Thyroid gland (tissue), 4 donors: ENCODE measurements at regions of chr1 and their contacts with region 1.

Region 1: DNA sequence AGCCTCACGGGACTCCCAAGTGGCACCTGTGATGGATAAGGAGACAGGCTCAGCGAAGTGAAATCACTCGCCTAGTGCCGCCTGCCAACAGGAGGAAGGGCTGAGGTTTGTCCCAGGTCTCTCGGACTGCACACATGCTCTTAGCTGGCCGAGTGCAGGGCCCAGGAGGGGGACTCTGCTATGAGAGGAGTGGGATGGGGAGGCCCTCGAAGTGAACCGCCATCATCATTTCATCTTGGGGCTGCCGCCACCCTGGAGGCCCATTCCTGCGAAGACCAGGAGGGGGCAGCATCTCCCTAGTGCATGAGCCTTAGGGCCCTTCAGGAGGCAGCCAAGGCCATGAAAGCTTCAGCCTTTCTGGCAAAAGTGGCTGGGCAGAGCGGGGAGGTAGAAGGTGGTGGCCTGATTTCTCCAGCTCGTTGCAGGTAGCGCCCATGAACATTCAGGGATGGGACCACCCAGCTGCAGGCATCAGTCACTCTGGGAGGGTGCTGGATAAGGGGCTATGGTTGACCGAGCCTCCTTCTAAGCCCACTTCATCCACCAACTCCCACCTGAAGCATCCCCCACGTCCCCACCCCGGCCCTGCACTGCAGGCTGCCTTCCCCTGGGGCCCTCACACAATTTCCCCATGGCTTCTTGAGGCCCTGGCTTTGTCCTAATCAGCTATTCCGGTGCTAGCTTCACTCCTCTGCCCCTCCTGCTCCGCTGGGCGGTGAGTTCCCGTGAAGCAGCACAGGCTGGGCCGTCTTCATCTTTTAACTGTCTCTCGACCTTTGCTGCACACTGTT is 17.2 kb upstream of the RASSF5 start:
- DNase-seq: peak; percentile 83 to 84
- H3K4me3 ChIP-seq: no peak overlapping the region
- H3K27ac ChIP-seq: peak overlapping the region in 1 of 3 donors; percentile 46
- H3K4me1 ChIP-seq: peaks cover 6% of the 10 kb centered on the region in 2 donors
- H3K27me3 ChIP-seq: no peaks in the 10 kb centered on the region
- CTCF ChIP-seq: peak; percentile 75 to 98 (median 96)
- POLR2A ChIP-seq: no peak

Region 2: DNA sequence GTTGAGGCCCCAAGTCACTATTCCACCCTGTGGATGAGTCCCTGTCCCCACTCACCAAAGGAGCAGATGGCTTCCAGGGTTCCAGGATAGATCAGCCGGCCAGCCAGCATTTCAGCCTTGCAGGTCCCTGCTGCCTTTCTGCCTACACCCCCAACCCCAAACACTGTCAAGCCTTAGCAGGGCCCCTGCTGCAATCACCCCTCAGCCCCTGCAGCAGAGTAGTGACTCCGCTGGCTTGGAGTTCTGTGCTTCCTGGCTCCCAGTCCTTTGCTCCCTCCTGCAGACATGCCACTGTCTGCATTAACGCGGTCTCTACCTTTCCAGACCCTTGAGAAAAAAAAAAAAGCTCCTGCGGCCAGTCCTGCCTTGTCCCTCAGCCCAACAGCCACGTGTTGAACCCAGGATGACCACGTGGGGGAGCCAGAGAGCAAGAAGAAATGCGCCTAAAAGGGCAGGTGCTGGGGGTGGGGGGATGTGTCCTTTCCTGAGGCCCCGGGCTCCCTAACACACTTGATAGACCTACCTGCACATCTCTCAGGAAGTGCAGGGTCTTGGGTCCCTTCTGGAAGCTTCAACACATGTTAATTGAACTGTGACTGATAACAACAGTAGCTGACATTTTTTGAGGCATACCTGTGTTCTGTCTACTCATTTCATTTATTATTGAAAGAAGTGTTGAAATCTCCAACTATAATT is 54.5 kb after region 1 on chr1:
- intact Hi-C with region 1: loop called (anchors 10 kb)
- DNase-seq: peak; percentile 82 to 88
- H3K4me3 ChIP-seq: no peak overlapping the region
- H3K27ac ChIP-seq: peak overlapping the region in 1 of 3 donors; percentile 37
- H3K4me1 ChIP-seq: peaks cover 16 to 30% of the 10 kb centered on the region in 2 donors
- H3K27me3 ChIP-seq: no peaks in the 10 kb centered on the region
- CTCF ChIP-seq: peak; percentile 67 to 90 (median 72)
- POLR2A ChIP-seq: no peak

Region 3: DNA sequence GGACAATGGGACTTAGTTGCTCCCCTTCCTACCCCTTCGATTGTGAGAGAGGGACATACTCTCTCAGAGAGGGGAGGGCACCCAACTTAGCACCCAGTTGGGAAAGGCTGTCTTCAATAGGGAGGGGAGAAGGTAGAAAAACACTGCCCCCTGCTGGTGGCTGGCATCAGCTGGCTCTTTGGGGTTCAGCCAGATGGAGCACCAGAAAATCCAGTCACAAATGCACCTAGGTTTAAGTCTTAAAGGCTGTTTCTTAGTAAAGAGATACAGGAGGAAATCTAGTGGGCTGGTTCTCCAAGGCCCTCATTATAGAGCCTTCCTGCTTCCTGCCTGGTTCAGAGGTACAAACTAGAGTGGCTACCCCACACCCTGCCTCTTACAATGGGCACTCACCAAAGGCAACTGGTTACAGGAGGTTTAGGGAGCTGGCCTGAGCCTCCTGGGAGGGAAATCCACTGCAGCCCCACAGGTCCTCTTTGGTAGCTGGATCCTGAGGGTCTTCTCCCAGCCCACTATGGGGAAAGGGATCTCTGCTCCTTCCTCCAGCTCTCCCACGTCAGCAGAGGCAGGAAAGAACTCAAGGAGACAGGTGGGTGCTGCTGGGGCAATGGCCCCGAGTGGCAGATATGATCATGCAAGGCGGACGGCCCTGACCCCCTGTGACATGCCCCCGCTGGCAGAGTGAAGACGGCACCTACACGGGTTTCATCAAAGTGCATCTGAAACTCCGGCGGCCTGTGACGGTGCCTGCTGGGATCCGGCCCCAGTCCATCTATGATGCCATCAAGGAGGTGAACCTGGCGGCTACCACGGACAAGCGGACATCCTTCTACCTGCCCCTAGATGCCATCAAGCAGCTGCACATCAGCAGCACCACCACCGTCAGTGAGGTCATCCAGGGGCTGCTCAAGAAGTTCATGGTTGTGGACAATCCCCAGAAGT is 93.8 kb after region 1 on chr1:
- intact Hi-C with region 1: loop called (anchors 2 kb)
- DNase-seq: peak; percentile 80 to 82
- H3K4me3 ChIP-seq: no peak overlapping the region
- H3K27ac ChIP-seq: peak overlapping the region in 2 of 3 donors; percentile 4 to 6
- H3K4me1 ChIP-seq: no peaks in the 10 kb centered on the region
- H3K27me3 ChIP-seq: no peaks in the 10 kb centered on the region
- CTCF ChIP-seq: peak; percentile 80 to 96 (median 85)
- POLR2A ChIP-seq: no peak

Region 4: DNA sequence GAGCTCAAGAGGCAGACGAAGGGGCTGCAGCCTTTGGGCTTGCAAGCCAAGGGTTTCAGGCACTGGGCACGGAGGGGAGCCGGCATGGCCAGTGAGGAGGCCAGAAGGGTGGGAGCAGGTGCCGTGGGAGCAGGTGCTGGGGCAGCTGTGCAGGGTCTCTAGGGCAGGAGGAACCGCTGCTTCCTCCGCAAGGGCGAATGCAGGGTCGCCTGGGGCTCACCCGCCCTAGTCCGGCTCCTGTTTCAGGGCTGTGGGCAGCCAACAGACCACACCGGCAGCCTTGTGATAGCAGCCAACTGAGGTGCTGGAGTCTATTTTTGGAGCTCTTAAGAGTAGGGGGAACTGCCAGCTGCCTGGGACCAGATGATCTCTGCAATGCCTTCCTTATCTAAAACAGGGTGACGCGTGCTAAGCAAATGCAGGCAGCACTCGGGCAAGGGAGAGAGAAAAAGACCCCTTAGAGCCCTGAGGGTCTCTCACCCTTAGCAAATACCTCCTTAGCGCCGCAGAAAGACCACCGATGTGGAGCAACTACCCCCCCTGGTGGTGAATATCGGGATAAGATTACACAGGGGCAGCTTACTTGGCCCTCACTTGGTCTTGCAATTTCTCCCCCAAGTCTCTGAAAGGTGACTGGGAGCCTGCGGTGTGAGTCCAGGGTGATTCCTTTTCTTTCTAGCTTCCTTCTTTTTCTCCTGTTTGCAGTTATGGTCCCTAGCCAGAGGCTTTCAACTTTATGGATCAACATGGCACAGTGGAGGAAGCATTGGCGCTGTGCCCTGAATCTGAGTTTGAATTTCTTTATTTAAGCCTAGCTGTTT is 173.9 kb after region 1 on chr1:
- intact Hi-C with region 1: loop called (anchors 10 kb)
- DNase-seq: peak; percentile 73 to 78
- H3K4me3 ChIP-seq: no peak overlapping the region
- H3K27ac ChIP-seq: no peak overlapping the region
- H3K4me1 ChIP-seq: peaks cover 8 to 11% of the 10 kb centered on the region in 2 donors
- H3K27me3 ChIP-seq: no peaks in the 10 kb centered on the region
- CTCF ChIP-seq: peak; percentile 67 to 97 (median 86)
- POLR2A ChIP-seq: no peak

Region 5: DNA sequence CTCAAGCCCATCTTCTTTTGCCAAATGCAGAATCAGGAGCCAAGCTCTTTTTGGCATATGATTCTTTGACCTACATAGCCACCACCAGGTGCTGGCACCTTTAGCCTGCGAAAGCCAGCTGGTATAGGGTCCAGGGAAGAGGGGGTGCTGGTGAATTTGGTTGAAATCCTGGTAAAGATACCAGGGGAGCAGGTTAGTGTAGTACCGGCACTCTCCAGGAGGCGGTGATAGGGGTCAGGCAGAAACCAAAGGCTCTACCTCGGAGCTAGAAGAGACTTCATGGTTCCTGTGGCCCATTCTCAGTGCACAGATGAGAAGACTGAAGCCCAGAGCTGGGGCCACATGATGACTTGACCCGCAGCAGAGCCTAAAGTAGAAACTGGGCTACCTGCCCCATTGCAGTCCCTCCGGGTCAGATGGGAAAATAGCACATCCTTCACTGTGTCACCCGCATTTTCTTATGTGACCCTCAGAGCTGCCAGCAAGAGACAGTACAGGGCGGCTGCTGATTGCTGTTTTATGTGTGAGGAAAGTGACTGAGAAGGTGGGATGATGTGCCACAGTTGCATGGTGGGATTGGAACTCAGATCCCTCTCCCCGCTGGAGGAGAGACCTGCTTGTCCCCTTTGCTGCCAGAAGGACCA is 244.4 kb after region 1 on chr1:
- intact Hi-C with region 1: no loop called
- DNase-seq: peak; percentile 38 to 53
- H3K4me3 ChIP-seq: no peak overlapping the region
- H3K27ac ChIP-seq: no peak overlapping the region
- H3K4me1 ChIP-seq: peaks cover 0 to 29% of the 10 kb centered on the region in 2 donors
- H3K27me3 ChIP-seq: no peaks in the 10 kb centered on the region
- CTCF ChIP-seq: peak in 5 of 6 experiments; percentile 35 to 62 (median 45)
- POLR2A ChIP-seq: no peak